Cardiac septum (tissue), 1 donor: ENCODE measurements at regions of chr3 and their contacts with region 1.

Region 1: GRCh38 chr3:124928333-124929202 is 6.0 kb downstream of the MUC13 start:
- DNase-seq: no peak

Region 2: GRCh38 chr3:124986158-124987143 is 57.9 kb after region 1 on chr3:
- intact Hi-C with region 1: no loop called
- DNase-seq: no peak

Region 3: GRCh38 chr3:125437631-125438435 is 509.3 kb after region 1 on chr3:
- intact Hi-C with region 1: loop called (anchors 2 kb)
- DNase-seq: peak; percentile 69

Region 4: DNA sequence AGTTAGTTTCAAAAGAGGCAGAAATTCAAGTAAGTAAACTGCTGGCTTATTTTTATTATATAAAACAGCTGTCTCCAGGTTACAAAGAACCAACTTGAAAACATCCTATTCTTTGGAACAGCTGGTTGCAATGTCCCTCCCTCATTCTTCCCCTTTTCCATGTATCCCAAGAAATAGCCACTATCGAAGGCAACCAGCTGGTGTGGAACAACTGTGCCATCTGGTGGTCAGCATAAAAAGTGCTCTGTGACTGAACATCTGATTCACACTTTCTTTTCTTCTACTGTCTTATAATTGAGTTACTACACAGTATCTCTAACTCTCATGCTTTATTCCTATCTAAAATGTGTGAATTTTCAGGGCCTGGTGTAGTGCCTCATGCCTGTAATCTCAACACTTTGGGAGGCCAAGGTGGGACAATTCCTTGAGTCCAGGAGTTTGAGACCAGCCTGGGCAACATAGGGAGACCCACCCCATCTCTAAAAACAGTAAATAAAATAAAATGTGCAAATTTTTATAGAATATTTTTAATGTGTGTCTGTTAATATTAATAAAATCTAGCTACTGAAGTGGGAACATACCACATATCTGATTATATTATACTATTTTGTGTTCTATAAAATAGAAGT is 657.1 kb after region 1 on chr3:
- intact Hi-C with region 1: loop called (anchors 10 kb)
- DNase-seq: no peak